ENCODE measurements at regions of chr5 and their contacts with region 1.

Region 1: GRCh38 chr5:95846554-95847260 is 24.2 kb upstream of the GLRX start:
- DNase-seq: peak; percentile 54 to 87 (median 61)
- ATAC-seq: peak; percentile 82
- H3K4me3 ChIP-seq: no peak overlapping the region
- H3K4me3 Mint-ChIP-seq: no peak overlapping the region
- H3K27ac ChIP-seq: no peak overlapping the region
- H3K27ac Mint-ChIP-seq: no peak overlapping the region
- H3K4me1 ChIP-seq: peaks cover 20% of the 10 kb centered on the region
- H3K4me1 Mint-ChIP-seq: peaks cover 15% of the 10 kb centered on the region
- H3K27me3 ChIP-seq: peaks cover 0 to 3% of the 10 kb centered on the region in 2 experiments
- H3K27me3 Mint-ChIP-seq: no peaks in the 10 kb centered on the region
- CTCF ChIP-seq: peak; percentile 95

Region 2: GRCh38 chr5:95554647-95555548 is 291.8 kb before region 1 on chr5 and contains the starts of genes ARSK and SKIC3:
- CTCF ChIA-PET with region 1: no interaction called
- POLR2A ChIA-PET with region 1: no interaction called
- intact Hi-C with region 1: loop called (anchors 10 kb)
- DNase-seq: peak; percentile 83 to 98 (median 87)
- ATAC-seq: peak; percentile 85
- H3K4me3 ChIP-seq: peak within 1 kb of the TSS; percentile 78
- H3K4me3 Mint-ChIP-seq: peak within 1 kb of the TSS; percentile 98
- H3K27ac ChIP-seq: peak within 1 kb of the TSS; percentile 69 to 78
- H3K27ac Mint-ChIP-seq: peak within 1 kb of the TSS; percentile 91
- H3K4me1 ChIP-seq: peaks cover 19% of the 10 kb centered on the region
- H3K4me1 Mint-ChIP-seq: peaks cover 59% of the 10 kb centered on the region
- H3K27me3 ChIP-seq: no peaks in the 10 kb centered on the region
- H3K27me3 Mint-ChIP-seq: no peaks in the 10 kb centered on the region
- CTCF ChIP-seq: peak; percentile 26
- total RNA-seq, gene ARSK: 2.2 to 2.7 TPM
- total RNA-seq, gene SKIC3: 63.8 to 65.2 TPM

Region 3: GRCh38 chr5:95664204-95664786 is 182.4 kb before region 1 on chr5:
- CTCF ChIA-PET with region 1: interaction called, 3 read pairs
- POLR2A ChIA-PET with region 1: interaction called, 3 read pairs
- intact Hi-C with region 1: loop called (anchors 1 to 2 kb)
- DNase-seq: peak in 9 of 14 experiments; percentile 6 to 62 (median 20)
- ATAC-seq: no peak
- H3K4me3 ChIP-seq: no peak overlapping the region
- H3K4me3 Mint-ChIP-seq: no peak overlapping the region
- H3K27ac ChIP-seq: no peak overlapping the region
- H3K27ac Mint-ChIP-seq: no peak overlapping the region
- H3K4me1 ChIP-seq: no peaks in the 10 kb centered on the region
- H3K4me1 Mint-ChIP-seq: peaks cover 6% of the 10 kb centered on the region
- H3K27me3 ChIP-seq: no peaks in the 10 kb centered on the region
- H3K27me3 Mint-ChIP-seq: no peaks in the 10 kb centered on the region
- CTCF ChIP-seq: peak; percentile 95

Region 4: GRCh38 chr5:95822542-95823181 is 24.0 kb before region 1 on chr5 and contains the start of gene GLRX:
- CTCF ChIA-PET with region 1: interaction called, 5 read pairs
- POLR2A ChIA-PET with region 1: interaction called, 10 read pairs
- intact Hi-C with region 1: loop called in 1 of 2 experiments (anchors 2 kb)
- DNase-seq: peak; percentile 22 to 76 (median 50)
- ATAC-seq: peak; percentile 39
- H3K4me3 ChIP-seq: peak within 1 kb of the TSS; percentile 84
- H3K4me3 Mint-ChIP-seq: peak within 1 kb of the TSS; percentile 98
- H3K27ac ChIP-seq: peak within 1 kb of the TSS; percentile 84 to 86
- H3K27ac Mint-ChIP-seq: peak within 1 kb of the TSS; percentile 83
- H3K4me1 ChIP-seq: peaks cover 64% of the 10 kb centered on the region
- H3K4me1 Mint-ChIP-seq: peaks cover 73% of the 10 kb centered on the region
- H3K27me3 ChIP-seq: no peaks in the 10 kb centered on the region
- H3K27me3 Mint-ChIP-seq: no peaks in the 10 kb centered on the region
- CTCF ChIP-seq: no peak
- total RNA-seq, gene GLRX: 16.9 to 18.7 TPM

Region 5: DNA sequence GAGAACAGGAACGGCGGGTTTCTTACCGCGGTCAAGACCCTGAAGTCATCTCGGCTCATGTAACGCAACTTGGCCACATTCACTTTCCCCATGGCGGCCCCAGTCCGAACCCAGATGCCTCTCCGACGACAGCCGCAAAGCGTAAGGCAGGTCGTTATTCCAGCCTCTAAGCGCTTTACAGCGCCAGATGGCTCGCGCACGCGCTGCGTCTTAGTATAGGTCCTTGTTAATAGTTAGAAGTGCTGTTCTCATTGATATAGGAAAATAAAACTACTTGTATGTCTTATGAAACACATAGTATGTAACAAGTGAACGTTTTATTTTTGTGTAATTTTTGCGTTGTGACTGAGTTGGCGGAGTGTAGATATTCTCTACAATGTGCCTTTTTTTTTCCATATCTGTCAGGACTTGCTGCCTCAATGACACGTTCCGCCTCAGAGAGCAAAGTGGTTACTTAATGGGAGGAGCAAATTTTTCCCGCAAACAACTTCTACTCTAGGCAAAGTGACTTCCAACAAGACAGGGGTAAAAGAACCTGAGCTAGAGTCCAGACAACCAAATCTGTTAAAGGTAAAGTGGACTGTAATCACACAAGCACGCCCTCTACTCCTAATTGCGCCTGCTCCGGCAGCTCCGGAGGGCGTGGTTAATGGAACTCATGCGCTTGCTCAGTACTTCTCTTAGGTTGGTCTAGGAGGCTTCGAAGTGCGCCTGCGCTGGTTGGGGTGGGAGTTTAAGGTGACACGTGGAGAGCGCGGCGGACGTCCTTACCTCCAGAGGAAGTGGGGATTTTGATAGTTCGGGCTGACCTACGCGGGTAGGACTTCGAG is 1336.6 kb after region 1 on chr5 and contains the start of gene RIOK2:
- CTCF ChIA-PET with region 1: no interaction called
- POLR2A ChIA-PET with region 1: no interaction called
- intact Hi-C with region 1: loop called in 1 of 2 experiments (anchors 10 kb)
- DNase-seq: peak; percentile 81 to 96 (median 90)
- ATAC-seq: peak; percentile 91
- H3K4me3 ChIP-seq: peak within 1 kb of the TSS; percentile 73
- H3K4me3 Mint-ChIP-seq: peak within 1 kb of the TSS; percentile 97
- H3K27ac ChIP-seq: peak within 1 kb of the TSS; percentile 90 to 96
- H3K27ac Mint-ChIP-seq: peak within 1 kb of the TSS; percentile 98
- H3K4me1 ChIP-seq: peaks cover 11% of the 10 kb centered on the region
- H3K4me1 Mint-ChIP-seq: peaks cover 44% of the 10 kb centered on the region
- H3K27me3 ChIP-seq: no peaks in the 10 kb centered on the region
- H3K27me3 Mint-ChIP-seq: no peaks in the 10 kb centered on the region
- CTCF ChIP-seq: no peak
- total RNA-seq, gene RIOK2: 25.1 to 26.0 TPM